Transverse colon (tissue), 4 donors: ENCODE measurements at regions of chr10 and their contacts with region 1.

Region 1: GRCh38 chr10:68010426-68010940 is 64.6 kb downstream of the HERC4 start:
- DNase-seq: no peak
- H3K4me3 ChIP-seq: no peak overlapping the region
- H3K27ac ChIP-seq: no peak overlapping the region
- H3K4me1 ChIP-seq: no peaks in the 10 kb centered on the region
- H3K27me3 ChIP-seq: no peaks in the 10 kb centered on the region
- CTCF ChIP-seq: no peak
- EP300 ChIP-seq: no peak
- POLR2A ChIP-seq: no peak

Region 2: GRCh38 chr10:68752711-68753350 is 742.3 kb after region 1 on chr10:
- in situ Hi-C with region 1: loop called in 1 of 4 experiments (anchors 25 kb)
- intact Hi-C with region 1: no loop called
- DNase-seq: no peak
- H3K4me3 ChIP-seq: no peak overlapping the region
- H3K27ac ChIP-seq: no peak overlapping the region
- H3K4me1 ChIP-seq: no peaks in the 10 kb centered on the region
- H3K27me3 ChIP-seq: no peaks in the 10 kb centered on the region
- CTCF ChIP-seq: no peak
- EP300 ChIP-seq: no peak
- POLR2A ChIP-seq: no peak